ENCODE measurements at regions of chrX and their contacts with region 1.

Region 1: GRCh38 chrX:47560831-47561652 is at the start of gene ARAF:
- DNase-seq: peak; percentile 95 to 99 (median 97)
- H3K4me3 ChIP-seq: peak within 1 kb of the TSS; percentile 69 to 74
- H3K4me3 Mint-ChIP-seq: peak within 1 kb of the TSS; percentile 84 to 97 (median 92)
- H3K27ac ChIP-seq: peak within 1 kb of the TSS; percentile 91
- H3K27ac Mint-ChIP-seq: peak within 1 kb of the TSS; percentile 92 to 99 (median 98)
- H3K4me1 ChIP-seq: peaks cover 43% of the 10 kb centered on the region
- H3K4me1 Mint-ChIP-seq: peaks cover 23 to 56% (median 40%) of the 10 kb centered on the region in 4 donors
- H3K27me3 ChIP-seq: no peaks in the 10 kb centered on the region
- H3K27me3 Mint-ChIP-seq: no peaks in the 10 kb centered on the region
- total RNA-seq, gene ARAF: 107 to 111 TPM

Region 2: GRCh38 chrX:46588263-46588662 is 972.8 kb before region 1 on chrX:
- CTCF ChIA-PET with region 1: no interaction called
- POLR2A ChIA-PET with region 1: no interaction called
- intact Hi-C with region 1: no loop called
- DNase-seq: peak in 4 of 5 donors; percentile 35 to 65 (median 38)
- H3K4me3 ChIP-seq: peak overlapping the region in 1 of 2 donors; percentile 6
- H3K4me3 Mint-ChIP-seq: peak overlapping the region; percentile 75 to 88 (median 80)
- H3K27ac ChIP-seq: peak overlapping the region; percentile 47
- H3K27ac Mint-ChIP-seq: peak overlapping the region; percentile 89 to 94 (median 91)
- H3K4me1 ChIP-seq: peaks cover 61% of the 10 kb centered on the region
- H3K4me1 Mint-ChIP-seq: peaks cover 23 to 68% (median 45%) of the 10 kb centered on the region in 4 donors
- H3K27me3 ChIP-seq: no peaks in the 10 kb centered on the region
- H3K27me3 Mint-ChIP-seq: no peaks in the 10 kb centered on the region

Region 3: DNA sequence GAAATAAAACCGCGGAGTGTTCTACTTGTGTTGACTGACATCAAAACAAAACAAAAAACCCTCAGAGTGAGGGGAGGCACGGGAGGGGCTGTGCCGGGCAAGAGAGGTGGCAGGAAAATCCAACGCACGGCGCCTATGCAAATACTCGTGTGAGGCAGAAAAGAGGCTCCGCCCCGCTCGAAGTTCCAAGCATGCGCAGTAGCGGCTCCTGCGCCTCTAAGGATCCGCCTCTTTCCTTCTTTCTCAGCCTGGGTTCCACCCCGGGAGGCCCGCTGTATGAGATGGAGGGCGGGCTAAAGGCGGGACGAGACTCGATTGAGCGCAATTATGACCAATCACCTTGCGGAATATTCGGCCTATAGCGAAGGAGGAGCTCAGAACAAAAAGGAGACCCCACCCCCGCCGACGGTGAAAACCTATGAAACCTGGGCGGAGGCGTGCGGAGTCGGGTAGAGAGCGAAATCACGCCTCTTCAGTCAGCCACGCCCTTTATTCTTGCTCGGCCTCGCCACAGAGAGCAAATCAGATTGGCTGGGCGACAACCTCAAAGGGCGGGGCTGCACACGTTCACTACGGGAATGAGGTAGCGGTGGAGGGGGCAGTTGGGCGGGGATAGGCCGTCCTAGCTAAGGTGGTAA is 343.3 kb before region 1 on chrX:
- CTCF ChIA-PET with region 1: no interaction called
- POLR2A ChIA-PET with region 1: no interaction called
- intact Hi-C with region 1: loop called (anchors 1 kb)
- DNase-seq: peak; percentile 98 to 100 (median 99)
- H3K4me3 ChIP-seq: peak overlapping the region; percentile 70 to 73
- H3K4me3 Mint-ChIP-seq: peak overlapping the region; percentile 89 to 99 (median 96)
- H3K27ac ChIP-seq: peak overlapping the region; percentile 99
- H3K27ac Mint-ChIP-seq: peak overlapping the region; percentile 95 to 100 (median 99)
- H3K4me1 ChIP-seq: peaks cover 30% of the 10 kb centered on the region
- H3K4me1 Mint-ChIP-seq: peaks cover 26 to 56% (median 41%) of the 10 kb centered on the region in 4 donors
- H3K27me3 ChIP-seq: no peaks in the 10 kb centered on the region
- H3K27me3 Mint-ChIP-seq: no peaks in the 10 kb centered on the region

Region 4: GRCh38 chrX:47595716-47596251 is 34.7 kb after region 1 on chrX:
- CTCF ChIA-PET with region 1: no interaction called
- POLR2A ChIA-PET with region 1: interaction called, 11 read pairs
- intact Hi-C with region 1: no loop called
- DNase-seq: no peak
- H3K4me3 ChIP-seq: no peak overlapping the region
- H3K4me3 Mint-ChIP-seq: peak overlapping the region in 5 of 8 donors; percentile 20 to 66 (median 48)
- H3K27ac ChIP-seq: no peak overlapping the region
- H3K27ac Mint-ChIP-seq: peak overlapping the region in 6 of 7 donors; percentile 48 to 89 (median 66)
- H3K4me1 ChIP-seq: peaks cover 19% of the 10 kb centered on the region
- H3K4me1 Mint-ChIP-seq: peaks cover 9 to 24% (median 14%) of the 10 kb centered on the region in 4 donors
- H3K27me3 ChIP-seq: no peaks in the 10 kb centered on the region
- H3K27me3 Mint-ChIP-seq: no peaks in the 10 kb centered on the region

Region 5: DNA sequence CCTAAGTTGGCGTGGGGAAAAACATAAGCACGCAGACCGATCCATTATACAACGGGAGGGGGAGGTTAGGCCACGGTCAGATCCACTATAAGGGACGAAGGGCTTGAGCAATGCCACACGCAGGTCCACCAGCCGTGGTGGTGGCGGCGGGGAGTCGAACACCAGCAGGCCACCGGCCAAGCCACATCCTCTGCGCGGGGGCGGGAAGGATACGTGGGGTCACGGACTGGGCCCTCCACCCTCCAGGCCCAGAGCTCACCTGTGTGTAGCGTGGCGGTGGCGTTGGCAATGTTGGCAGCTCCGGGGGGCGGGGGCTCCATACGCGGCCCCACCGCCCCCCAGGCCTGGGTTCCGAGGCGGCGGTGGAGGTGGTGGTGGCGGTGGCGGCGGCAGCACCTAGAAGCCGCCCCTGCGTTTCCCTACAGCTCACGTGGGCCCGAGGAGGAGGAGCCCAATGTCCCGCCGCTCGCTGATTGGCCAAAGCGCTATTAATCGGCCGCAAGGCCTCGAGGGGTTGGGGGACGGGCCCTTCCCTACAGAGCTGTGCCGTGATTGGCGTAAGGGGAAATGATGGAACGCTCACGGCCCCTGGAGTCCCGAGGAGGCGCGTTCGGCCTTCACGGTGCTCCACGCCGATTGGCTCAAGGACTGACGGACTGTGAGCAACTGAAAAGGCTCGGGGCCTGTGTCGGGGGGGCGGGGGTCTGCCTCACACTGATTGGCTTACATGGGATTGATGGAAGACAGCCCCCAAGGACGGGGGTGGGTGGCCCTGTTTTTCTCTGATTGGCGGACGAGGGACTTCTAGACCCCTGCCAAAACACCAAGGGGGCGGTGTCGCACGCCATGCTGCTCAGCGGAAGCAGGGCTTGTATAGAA is 89.4 kb after region 1 on chrX and contains the start of gene ELK1:
- CTCF ChIA-PET with region 1: interaction called, 3 read pairs
- POLR2A ChIA-PET with region 1: interaction called, 14 read pairs
- intact Hi-C with region 1: loop called (anchors 1 kb)
- DNase-seq: peak; percentile 85 to 95 (median 90)
- H3K4me3 ChIP-seq: peak within 1 kb of the TSS in 1 of 2 donors; percentile 69
- H3K4me3 Mint-ChIP-seq: peak within 1 kb of the TSS; percentile 85 to 94 (median 88)
- H3K27ac ChIP-seq: peak within 1 kb of the TSS; percentile 74
- H3K27ac Mint-ChIP-seq: peak within 1 kb of the TSS; percentile 87 to 97 (median 97)
- H3K4me1 ChIP-seq: peaks cover 33% of the 10 kb centered on the region
- H3K4me1 Mint-ChIP-seq: peaks cover 31 to 42% (median 36%) of the 10 kb centered on the region in 4 donors
- H3K27me3 ChIP-seq: no peaks in the 10 kb centered on the region
- H3K27me3 Mint-ChIP-seq: no peaks in the 10 kb centered on the region
- total RNA-seq, gene ELK1: 36.4 to 38.3 TPM

Region 6: GRCh38 chrX:47836164-47837072 is 275.4 kb after region 1 on chrX and contains the start of gene ZNF81:
- CTCF ChIA-PET with region 1: no interaction called
- POLR2A ChIA-PET with region 1: no interaction called
- intact Hi-C with region 1: loop called (anchors 5 kb)
- DNase-seq: peak; percentile 86 to 95 (median 88)
- H3K4me3 ChIP-seq: peak within 1 kb of the TSS; percentile 78 to 84
- H3K4me3 Mint-ChIP-seq: peak within 1 kb of the TSS; percentile 92 to 98 (median 97)
- H3K27ac ChIP-seq: peak within 1 kb of the TSS; percentile 62
- H3K27ac Mint-ChIP-seq: peak within 1 kb of the TSS; percentile 92 to 99 (median 98)
- H3K4me1 ChIP-seq: peaks cover 16% of the 10 kb centered on the region
- H3K4me1 Mint-ChIP-seq: peaks cover 6 to 24% (median 13%) of the 10 kb centered on the region in 4 donors
- H3K27me3 ChIP-seq: no peaks in the 10 kb centered on the region
- H3K27me3 Mint-ChIP-seq: no peaks in the 10 kb centered on the region
- total RNA-seq, gene ZNF81: 9.9 to 11.5 TPM

Region 7: GRCh38 chrX:48726596-48726995 is 1165.6 kb after region 1 on chrX:
- CTCF ChIA-PET with region 1: no interaction called
- POLR2A ChIA-PET with region 1: no interaction called
- intact Hi-C with region 1: no loop called
- DNase-seq: peak in 3 of 5 donors; percentile 20 to 41 (median 20)
- H3K4me3 ChIP-seq: no peak overlapping the region
- H3K4me3 Mint-ChIP-seq: peak overlapping the region in 4 of 8 donors; percentile 10 to 59 (median 24)
- H3K27ac ChIP-seq: no peak overlapping the region
- H3K27ac Mint-ChIP-seq: peak overlapping the region in 6 of 7 donors; percentile 23 to 76 (median 29)
- H3K4me1 ChIP-seq: peaks cover 46% of the 10 kb centered on the region
- H3K4me1 Mint-ChIP-seq: peaks cover 26 to 39% (median 36%) of the 10 kb centered on the region in 4 donors
- H3K27me3 ChIP-seq: no peaks in the 10 kb centered on the region
- H3K27me3 Mint-ChIP-seq: no peaks in the 10 kb centered on the region